B cell (primary cell): ENCODE measurements at regions of chr9 and their contacts with region 1.

Region 1: GRCh38 chr9:84170521-84171141 is 169.9 kb downstream of the SLC28A3 start:
- DNase-seq: no peak
- ATAC-seq: no peak
- H3K4me3 ChIP-seq: no peak overlapping the region
- H3K4me3 Mint-ChIP-seq: no peak overlapping the region
- H3K27ac ChIP-seq: no peak overlapping the region
- H3K27ac Mint-ChIP-seq: no peak overlapping the region
- H3K4me1 ChIP-seq: no peaks in the 10 kb centered on the region
- H3K4me1 Mint-ChIP-seq: no peaks in the 10 kb centered on the region
- H3K27me3 ChIP-seq: no peaks in the 10 kb centered on the region
- H3K27me3 Mint-ChIP-seq: peaks cover 9% of the 10 kb centered on the region
- CTCF ChIP-seq: no peak

Region 2: DNA sequence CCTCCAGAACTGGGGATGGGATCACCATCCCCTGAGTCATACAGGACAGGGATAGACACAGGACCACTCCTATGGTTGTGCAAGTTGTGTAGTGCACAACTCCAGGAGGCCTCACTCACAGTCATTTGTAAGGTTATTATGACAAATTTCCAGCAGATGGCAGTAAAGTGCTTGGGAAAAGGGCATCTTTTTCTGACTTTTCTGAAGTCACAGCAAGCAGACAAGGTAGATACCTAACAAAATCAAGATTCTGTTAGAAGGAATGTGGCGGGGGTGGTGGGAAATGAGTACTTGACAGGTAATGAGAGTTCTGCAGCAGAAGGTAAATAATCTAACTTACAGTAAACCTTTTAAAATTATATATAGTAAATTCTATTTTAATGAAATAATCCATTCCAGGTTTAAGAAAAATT is 232.7 kb before region 1 on chr9:
- CTCF ChIA-PET with region 1: interaction called, 37 read pairs
- POLR2A ChIA-PET with region 1: no interaction called
- intact Hi-C with region 1: loop called (anchors 1 kb)
- DNase-seq: peak; percentile 80
- ATAC-seq: peak; percentile 68
- H3K4me3 ChIP-seq: no peak overlapping the region
- H3K4me3 Mint-ChIP-seq: no peak overlapping the region
- H3K27ac ChIP-seq: no peak overlapping the region
- H3K27ac Mint-ChIP-seq: no peak overlapping the region
- H3K4me1 ChIP-seq: no peaks in the 10 kb centered on the region
- H3K4me1 Mint-ChIP-seq: no peaks in the 10 kb centered on the region
- H3K27me3 ChIP-seq: no peaks in the 10 kb centered on the region
- H3K27me3 Mint-ChIP-seq: no peaks in the 10 kb centered on the region
- CTCF ChIP-seq: peak; percentile 92

Region 3: DNA sequence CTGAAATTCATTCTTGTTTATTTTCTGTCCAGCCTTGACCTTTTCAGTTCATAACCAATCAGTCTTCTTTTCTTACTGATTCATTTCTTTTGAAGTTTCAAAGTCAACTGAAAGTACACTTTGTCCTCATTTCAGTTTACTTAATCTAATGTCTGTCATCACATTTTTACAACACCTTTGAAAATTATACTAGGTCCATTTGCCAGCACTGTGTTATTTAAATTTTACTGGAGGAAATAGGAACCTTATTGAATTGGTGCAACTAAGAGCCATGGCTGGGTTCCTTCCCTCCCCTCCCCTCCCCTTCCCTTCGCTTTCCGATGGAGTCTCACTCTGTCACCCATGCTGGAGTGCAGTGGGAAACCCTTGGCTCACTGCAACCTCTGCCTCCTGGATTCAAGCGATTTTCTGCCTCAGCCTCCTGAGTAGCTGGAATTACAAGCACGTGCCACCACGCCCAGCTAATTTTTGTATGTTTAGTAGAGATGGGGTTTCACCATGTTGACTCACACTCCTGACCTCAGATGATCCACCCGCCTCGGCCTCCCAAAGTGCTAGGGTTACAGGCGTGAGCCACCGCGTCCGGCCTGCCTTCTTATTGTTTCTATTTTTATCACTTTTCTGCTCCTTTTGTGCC is 183.7 kb before region 1 on chr9:
- CTCF ChIA-PET with region 1: no interaction called
- POLR2A ChIA-PET with region 1: no interaction called
- intact Hi-C with region 1: loop called (anchors 5 kb)
- DNase-seq: no peak
- ATAC-seq: no peak
- H3K4me3 ChIP-seq: no peak overlapping the region
- H3K4me3 Mint-ChIP-seq: no peak overlapping the region
- H3K27ac ChIP-seq: no peak overlapping the region
- H3K27ac Mint-ChIP-seq: no peak overlapping the region
- H3K4me1 ChIP-seq: peaks cover 4 to 7% of the 10 kb centered on the region in 2 donors
- H3K4me1 Mint-ChIP-seq: peaks cover 27% of the 10 kb centered on the region
- H3K27me3 ChIP-seq: no peaks in the 10 kb centered on the region
- H3K27me3 Mint-ChIP-seq: no peaks in the 10 kb centered on the region
- CTCF ChIP-seq: no peak

Region 4: DNA sequence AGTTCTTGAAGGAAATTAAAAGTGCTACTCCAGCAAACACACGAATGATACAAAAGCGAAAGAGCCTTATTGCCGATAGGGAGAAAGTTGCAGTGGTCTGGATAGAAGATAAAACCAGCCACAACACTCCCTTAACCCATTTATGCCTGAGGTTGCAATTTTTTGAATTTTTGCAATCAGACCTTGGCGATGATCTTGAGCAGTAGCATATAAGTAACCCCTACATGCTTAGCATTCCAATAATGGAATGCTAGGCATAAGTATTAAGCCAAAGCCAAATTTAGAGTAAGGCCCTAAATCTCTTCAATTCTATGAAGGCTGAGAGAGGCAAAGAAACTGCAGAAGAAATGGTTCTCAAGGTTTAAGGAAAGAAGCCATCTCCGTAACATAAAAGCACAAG is 16.5 kb after region 1 on chr9:
- CTCF ChIA-PET with region 1: interaction called, 10 read pairs
- POLR2A ChIA-PET with region 1: no interaction called
- intact Hi-C with region 1: no loop called
- DNase-seq: no peak
- ATAC-seq: no peak
- H3K4me3 ChIP-seq: no peak overlapping the region
- H3K4me3 Mint-ChIP-seq: no peak overlapping the region
- H3K27ac ChIP-seq: no peak overlapping the region
- H3K27ac Mint-ChIP-seq: no peak overlapping the region
- H3K4me1 ChIP-seq: no peaks in the 10 kb centered on the region
- H3K4me1 Mint-ChIP-seq: no peaks in the 10 kb centered on the region
- H3K27me3 ChIP-seq: peaks cover 0 to 3% (median 0%) of the 10 kb centered on the region in 4 experiments
- H3K27me3 Mint-ChIP-seq: peaks cover 17% of the 10 kb centered on the region
- CTCF ChIP-seq: no peak